ENCODE measurements at regions of chr6 and their contacts with region 1.

Region 1: DNA sequence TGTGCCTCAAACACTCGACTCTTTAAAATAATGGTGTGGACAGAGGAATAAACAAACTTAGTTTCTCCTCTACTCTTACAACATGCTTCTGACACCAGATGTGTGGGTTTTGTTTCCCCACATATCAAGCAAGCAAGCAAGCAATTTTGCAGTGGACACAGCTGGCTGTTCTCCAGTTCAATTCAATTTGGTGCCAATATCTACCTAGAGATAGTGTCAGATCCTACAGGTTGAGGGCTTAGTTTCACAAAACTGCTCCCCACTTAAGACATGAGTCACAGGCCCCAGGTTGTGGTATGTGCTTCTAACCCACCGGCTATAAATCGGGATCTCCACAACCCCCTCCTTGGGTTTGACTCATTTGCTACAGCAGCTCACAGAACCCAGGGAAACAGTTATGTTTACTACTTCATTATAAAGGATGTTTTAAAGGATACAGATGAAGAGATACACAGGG is 131.4 kb upstream of the TRAF3IP2 start:
- DNase-seq: peak in 1 of 9 donors; percentile 41
- ATAC-seq: no peak
- H3K4me3 ChIP-seq: no peak overlapping the region
- H3K4me3 Mint-ChIP-seq: peak overlapping the region; percentile 10 to 69 (median 48)
- H3K27ac ChIP-seq: peak overlapping the region; percentile 38
- H3K27ac Mint-ChIP-seq: peak overlapping the region; percentile 21 to 99 (median 91)
- H3K4me1 ChIP-seq: peaks cover 63 to 82% of the 10 kb centered on the region in 2 donors
- H3K4me1 Mint-ChIP-seq: peaks cover 63 to 94% (median 90%) of the 10 kb centered on the region in 7 donors
- H3K27me3 ChIP-seq: no peaks in the 10 kb centered on the region
- H3K27me3 Mint-ChIP-seq: no peaks in the 10 kb centered on the region

Region 2: GRCh38 chr6:111724505-111724904 is 12.6 kb before region 1 on chr6:
- CTCF ChIA-PET with region 1: interaction called, 4 read pairs
- POLR2A ChIA-PET with region 1: interaction called, 5 read pairs
- intact Hi-C with region 1: loop called in 1 of 2 experiments (anchors 1 kb)
- DNase-seq: peak in 7 of 9 donors; percentile 26 to 62 (median 56)
- ATAC-seq: peak; percentile 75
- H3K4me3 ChIP-seq: peak overlapping the region; percentile 11
- H3K4me3 Mint-ChIP-seq: peak overlapping the region; percentile 70 to 87 (median 76)
- H3K27ac ChIP-seq: peak overlapping the region; percentile 76
- H3K27ac Mint-ChIP-seq: peak overlapping the region; percentile 87 to 98 (median 92)
- H3K4me1 ChIP-seq: peaks cover 37 to 73% of the 10 kb centered on the region in 2 donors
- H3K4me1 Mint-ChIP-seq: peaks cover 43 to 97% (median 87%) of the 10 kb centered on the region in 7 donors
- H3K27me3 ChIP-seq: no peaks in the 10 kb centered on the region
- H3K27me3 Mint-ChIP-seq: no peaks in the 10 kb centered on the region

Measured in naive thymus-derived CD4-positive, alpha-beta T cell (primary cell).